RWPE1 (cell line): ENCODE measurements at regions of chr6 and their contacts with region 1.

Region 1: DNA sequence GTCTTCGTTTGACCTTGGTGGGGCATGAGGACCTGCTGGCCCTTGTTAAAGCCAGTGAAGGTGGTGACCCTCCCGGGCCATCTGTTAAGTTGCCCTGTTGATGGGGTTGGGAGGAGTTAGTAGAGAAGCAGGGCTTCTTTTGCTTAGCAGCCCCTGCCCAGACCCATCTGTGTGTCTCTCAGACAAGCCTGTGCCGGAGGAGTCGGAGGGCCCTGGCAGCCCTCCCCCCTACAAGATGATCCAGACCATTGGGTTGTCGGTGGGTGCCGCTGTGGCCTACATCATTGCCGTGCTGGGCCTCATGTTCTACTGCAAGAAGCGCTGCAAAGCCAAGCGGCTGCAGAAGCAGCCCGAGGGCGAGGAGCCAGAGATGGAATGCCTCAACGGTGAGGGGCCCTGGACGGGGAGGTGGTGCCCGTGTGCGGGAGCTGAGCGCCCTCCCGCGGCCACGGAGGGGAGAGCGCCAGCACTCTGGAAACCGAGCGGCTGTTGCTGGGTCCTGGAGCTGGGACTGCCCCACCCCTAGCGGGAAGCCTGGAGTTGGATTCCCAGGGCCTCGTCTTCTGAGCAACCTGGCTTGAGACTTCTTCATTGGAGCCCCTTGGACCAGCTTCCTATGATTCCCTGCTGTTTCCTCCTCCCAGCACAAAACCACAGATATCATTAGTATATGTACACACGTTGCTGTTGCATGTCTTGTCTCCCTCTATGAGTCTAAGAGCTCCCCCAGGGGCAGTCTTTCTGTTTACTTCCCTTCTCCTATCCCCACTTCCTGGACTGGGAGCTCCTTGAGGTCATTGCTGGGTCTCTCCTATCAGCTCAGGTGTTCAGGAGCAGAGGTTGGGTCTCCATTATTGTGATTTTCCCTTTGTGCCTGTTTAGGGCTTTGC is 27.6 kb upstream of the SRF start:
- DNase-seq: peak; percentile 88
- H3K27ac ChIP-seq: peak overlapping the region; percentile 86
- CTCF ChIP-seq: peak; percentile 92

Region 2: DNA sequence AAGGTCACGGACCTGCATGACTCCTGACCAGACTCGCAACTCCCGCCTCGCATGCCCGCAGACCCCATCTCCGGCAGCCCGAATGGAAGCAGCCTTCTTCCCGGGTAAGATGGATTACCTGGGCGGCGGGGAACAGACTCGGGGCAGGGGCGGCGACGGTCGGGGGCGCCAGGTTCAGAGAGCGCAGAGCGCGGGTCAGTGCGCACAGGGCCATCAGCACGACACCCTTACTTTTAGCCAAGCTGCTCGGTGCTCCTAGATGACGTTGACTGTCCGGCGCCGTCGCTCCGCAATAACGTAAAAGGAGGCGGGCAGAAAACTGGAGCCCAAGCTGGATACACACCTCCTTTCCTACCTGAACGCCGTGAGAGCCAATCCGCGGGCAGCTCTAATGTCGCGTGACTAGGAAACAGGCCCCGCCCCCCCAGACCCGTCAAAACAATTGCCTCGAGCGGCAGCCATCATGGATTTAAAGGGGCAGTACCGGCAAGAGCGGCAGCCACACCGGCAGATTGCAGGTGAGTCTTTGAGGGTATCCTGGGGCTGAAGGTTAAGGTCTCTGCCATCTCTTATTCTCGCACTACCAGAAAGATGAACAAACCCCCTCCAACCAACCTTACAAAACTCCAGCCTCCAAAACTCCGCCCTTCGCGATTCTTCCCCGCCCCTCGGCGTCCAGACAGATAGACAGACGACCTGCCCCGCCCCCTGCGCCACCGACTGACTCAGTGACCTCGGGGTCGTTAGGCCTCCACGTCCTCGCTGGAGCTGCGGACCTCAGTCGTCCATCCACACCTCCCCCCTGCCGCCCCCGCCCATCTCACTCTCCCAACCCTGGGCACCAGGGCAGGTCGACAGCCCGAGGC is 84.1 kb before region 1 on chr6 and contains the starts of genes KLC4 and MRPL2:
- CTCF ChIA-PET with region 1: interaction called, 11 read pairs
- POLR2A ChIA-PET with region 1: no interaction called
- DNase-seq: peak; percentile 99
- H3K27ac ChIP-seq: peak within 1 kb of the TSS; percentile 85
- CTCF ChIP-seq: no peak

Region 3: GRCh38 chr6:43075670-43076463 is 67.6 kb before region 1 on chr6 and contains the start of gene PTK7:
- CTCF ChIA-PET with region 1: interaction called, 14 read pairs
- POLR2A ChIA-PET with region 1: no interaction called
- DNase-seq: no peak
- H3K27ac ChIP-seq: peak within 1 kb of the TSS; percentile 83
- CTCF ChIP-seq: no peak